ENCODE measurements at regions of chr10 and their contacts with region 1.

Region 1: DNA sequence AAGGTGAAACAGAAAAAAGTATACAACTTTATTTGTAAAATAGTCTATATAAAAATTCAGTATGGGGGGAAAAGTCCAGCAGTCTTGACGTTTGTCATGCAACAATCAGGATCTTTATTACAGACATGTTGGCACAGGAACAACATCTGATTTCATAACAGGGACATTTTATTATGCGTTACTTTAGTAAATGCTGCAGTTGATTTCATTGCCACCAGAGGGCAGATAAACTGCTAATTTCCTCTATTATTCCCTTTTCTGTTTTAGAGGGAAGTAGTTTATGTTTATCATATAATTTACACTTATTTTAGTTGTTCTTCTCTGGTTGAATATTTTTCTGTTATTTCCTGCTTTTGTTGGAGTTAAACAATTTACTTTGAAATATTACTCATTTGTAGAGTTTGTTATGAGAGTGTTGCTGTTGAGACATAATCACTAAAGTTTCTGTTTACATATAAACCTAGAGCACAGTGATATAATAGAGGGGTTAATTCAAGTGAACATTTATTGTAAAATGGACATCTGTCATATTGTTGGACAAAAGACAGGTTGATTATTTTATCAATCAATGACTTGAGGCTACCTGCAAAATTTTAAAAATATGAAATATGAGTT is 3.3 kb downstream of the PLXDC2 start:
- DNase-seq: no peak
- H3K4me3 ChIP-seq: peak overlapping the region; percentile 72 to 85
- H3K27ac ChIP-seq: peak overlapping the region; percentile 16 to 94
- H3K4me1 ChIP-seq: peaks cover 0 to 31% of the 10 kb centered on the region in 2 donors
- H3K27me3 ChIP-seq: no peaks in the 10 kb centered on the region
- CTCF ChIP-seq: peak; percentile 61 to 77 (median 61)

Region 2: DNA sequence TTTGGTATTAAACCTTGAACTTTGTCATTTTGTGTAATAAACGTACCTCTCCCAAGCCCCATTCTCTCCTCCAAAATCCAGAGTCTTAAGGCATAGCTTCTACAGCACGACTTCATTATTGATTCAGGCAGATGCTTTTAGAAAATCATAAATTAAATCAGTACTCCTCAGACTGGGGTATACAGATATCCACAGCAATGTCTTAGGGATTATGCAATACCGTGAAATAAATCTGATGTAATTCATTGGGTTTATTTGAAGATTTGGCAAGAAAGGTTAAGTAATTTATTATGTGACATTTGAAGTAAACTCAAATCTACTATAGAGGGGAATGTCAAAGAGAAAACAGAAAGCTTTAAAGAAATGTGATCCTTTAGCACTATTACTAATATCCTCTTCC is 249.4 kb before region 1 on chr10:
- intact Hi-C with region 1: loop called (anchors 5 kb)
- DNase-seq: no peak
- H3K4me3 ChIP-seq: no peak overlapping the region
- H3K27ac ChIP-seq: no peak overlapping the region
- H3K4me1 ChIP-seq: peaks cover 0 to 11% of the 10 kb centered on the region in 2 donors
- H3K27me3 ChIP-seq: no peaks in the 10 kb centered on the region
- CTCF ChIP-seq: no peak

Region 3: DNA sequence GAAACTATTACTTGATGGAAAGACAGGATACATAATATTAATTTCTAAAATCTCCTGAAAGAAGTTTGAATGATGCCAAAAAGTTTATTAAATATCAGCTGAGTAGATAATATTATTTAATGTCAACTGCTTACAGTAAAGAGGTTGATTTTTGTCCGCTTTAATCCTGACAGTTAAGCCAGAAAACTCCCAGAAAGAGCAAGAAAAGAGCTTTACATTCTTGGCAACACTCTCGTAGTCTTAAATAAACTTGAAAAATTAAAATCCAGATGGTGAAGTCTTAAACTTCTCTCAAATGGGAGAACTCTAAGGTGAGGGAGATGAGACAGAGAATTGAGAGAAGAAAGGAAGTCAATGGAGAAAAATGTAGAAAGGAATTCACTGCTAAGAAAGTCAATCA is 202.6 kb before region 1 on chr10:
- intact Hi-C with region 1: no loop called
- DNase-seq: no peak
- H3K4me3 ChIP-seq: no peak overlapping the region
- H3K27ac ChIP-seq: no peak overlapping the region
- H3K4me1 ChIP-seq: no peaks in the 10 kb centered on the region
- H3K27me3 ChIP-seq: no peaks in the 10 kb centered on the region
- CTCF ChIP-seq: no peak

Region 4: DNA sequence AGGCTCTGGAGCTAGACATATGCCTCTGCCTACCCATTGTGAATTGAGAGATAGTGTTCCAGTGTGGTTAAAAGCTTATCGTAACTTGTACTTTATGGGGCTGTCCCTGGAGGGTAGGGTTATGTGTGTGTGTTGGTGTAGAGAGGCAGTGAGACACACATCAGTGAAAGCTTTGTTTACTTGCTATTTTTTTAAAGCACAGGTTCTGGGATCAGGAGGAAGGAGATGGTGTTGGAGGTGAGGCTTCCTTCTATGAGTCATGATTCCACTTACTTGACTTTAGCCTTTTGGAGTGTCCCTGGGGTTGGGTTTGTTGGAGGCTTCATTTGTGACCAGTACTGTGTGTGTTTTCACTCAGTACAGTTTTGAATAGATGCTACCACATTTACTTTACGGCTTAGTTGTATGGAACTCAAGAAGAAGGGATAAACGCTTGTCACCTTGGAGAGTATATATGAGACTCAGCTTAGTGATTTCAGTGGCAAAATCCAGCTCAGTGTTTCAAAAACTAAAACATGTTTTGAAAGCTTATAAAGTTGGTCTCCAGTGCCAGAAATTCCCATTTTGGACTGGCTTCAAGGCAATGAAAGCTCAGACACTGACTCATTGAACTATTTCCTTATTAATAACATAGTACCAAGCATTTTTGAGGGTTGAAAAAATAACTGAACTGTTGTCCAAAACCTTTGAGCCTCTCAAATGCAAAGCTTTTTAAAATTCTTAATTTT is 102.9 kb after region 1 on chr10:
- intact Hi-C with region 1: loop called (anchors 2 kb)
- DNase-seq: peak in 1 of 2 donors; percentile 82
- H3K4me3 ChIP-seq: peak overlapping the region; percentile 18 to 35
- H3K27ac ChIP-seq: peak overlapping the region; percentile 90 to 94
- H3K4me1 ChIP-seq: peaks cover 7 to 65% of the 10 kb centered on the region in 2 donors
- H3K27me3 ChIP-seq: no peaks in the 10 kb centered on the region
- CTCF ChIP-seq: no peak

Region 5: GRCh38 chr10:20415684-20416083 is 596.2 kb after region 1 on chr10:
- intact Hi-C with region 1: loop called (anchors 10 kb)
- DNase-seq: peak in 1 of 2 donors; percentile 64
- H3K4me3 ChIP-seq: no peak overlapping the region
- H3K27ac ChIP-seq: peak overlapping the region; percentile 70 to 75
- H3K4me1 ChIP-seq: no peaks in the 10 kb centered on the region
- H3K27me3 ChIP-seq: no peaks in the 10 kb centered on the region
- CTCF ChIP-seq: no peak

Region 6: DNA sequence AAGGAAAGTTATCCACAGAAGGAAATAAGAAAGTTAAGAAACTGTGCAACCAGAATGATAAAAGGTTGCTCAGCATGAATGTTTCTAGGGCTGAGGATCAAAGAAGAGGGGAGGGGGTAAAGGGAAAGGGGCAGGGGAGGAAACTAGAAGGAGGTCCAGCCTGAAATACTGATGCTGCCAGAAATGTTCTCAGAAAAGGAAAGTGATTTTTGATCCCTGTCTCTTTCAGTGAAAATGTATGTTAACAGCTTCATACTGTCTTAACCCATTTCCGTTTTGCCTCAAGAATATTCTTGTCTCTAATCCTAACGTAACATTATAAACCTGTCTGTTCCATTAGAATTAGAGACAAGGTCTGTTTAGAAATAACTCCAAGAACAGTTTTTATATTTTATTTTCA is 1028.0 kb after region 1 on chr10:
- intact Hi-C with region 1: loop called (anchors 10 kb)
- DNase-seq: no peak
- H3K4me3 ChIP-seq: no peak overlapping the region
- H3K27ac ChIP-seq: no peak overlapping the region
- H3K4me1 ChIP-seq: peaks cover 0 to 3% of the 10 kb centered on the region in 2 donors
- H3K27me3 ChIP-seq: no peaks in the 10 kb centered on the region
- CTCF ChIP-seq: no peak